ENCODE measurements at regions of chr17 and their contacts with region 1.

Region 1: GRCh38 chr17:82858352-82859126 is 18.7 kb upstream of the ZNF750 start:
- DNase-seq: peak in 4 of 9 donors; percentile 22 to 40 (median 38)
- ATAC-seq: peak; percentile 36
- H3K4me3 ChIP-seq: peak overlapping the region; percentile 30
- H3K4me3 Mint-ChIP-seq: peak overlapping the region; percentile 7 to 91 (median 82)
- H3K27ac ChIP-seq: peak overlapping the region; percentile 74
- H3K27ac Mint-ChIP-seq: peak overlapping the region; percentile 90 to 98 (median 96)
- H3K4me1 ChIP-seq: peaks cover 33 to 38% of the 10 kb centered on the region in 2 donors
- H3K4me1 Mint-ChIP-seq: peaks cover 30 to 62% (median 56%) of the 10 kb centered on the region in 7 donors
- H3K27me3 ChIP-seq: no peaks in the 10 kb centered on the region
- H3K27me3 Mint-ChIP-seq: no peaks in the 10 kb centered on the region

Region 2: DNA sequence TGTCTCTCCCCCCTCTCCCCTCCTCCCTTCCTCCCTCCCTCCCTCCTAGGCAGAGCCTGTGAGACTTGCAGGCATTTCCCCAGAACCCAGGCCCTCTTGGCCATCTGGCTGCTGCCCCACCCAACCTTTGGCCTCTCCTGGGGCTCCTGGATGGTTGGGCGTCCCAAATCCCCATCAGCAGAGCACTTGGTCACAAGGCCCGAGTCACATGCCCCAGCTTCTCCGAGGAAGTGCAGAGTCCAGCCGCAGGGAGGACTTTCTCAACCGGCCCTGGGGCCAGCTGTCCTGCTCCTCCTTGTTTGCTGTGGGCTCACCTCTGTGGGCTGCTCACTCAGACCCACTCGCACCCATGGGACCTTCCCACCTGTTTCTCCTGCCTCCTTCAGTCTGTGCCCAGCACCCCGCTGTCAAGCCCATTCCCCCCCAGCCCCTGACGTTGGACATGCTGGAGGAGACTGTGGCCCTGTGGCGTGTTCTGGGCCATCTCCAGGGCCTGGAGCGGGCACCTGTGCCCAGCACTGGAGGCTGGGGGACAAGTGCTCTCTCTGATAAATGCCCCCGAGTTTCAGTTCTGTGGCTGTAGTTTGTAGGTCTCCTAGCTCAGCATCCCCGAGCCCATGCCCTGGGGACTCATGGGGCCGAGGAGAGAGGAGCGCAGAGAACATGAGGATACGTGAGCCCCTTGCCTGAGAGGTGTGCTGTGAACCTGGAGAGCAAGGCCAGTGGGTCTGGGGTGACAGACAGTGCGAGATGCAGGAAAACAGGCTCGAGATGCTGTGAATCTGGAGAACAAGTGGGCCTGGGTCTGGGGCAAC is 23.6 kb after region 1 on chr17:
- CTCF ChIA-PET with region 1: interaction called, 14 read pairs
- POLR2A ChIA-PET with region 1: interaction called, 84 read pairs
- intact Hi-C with region 1: no loop called
- DNase-seq: no peak
- ATAC-seq: no peak
- H3K4me3 ChIP-seq: peak overlapping the region; percentile 47
- H3K4me3 Mint-ChIP-seq: peak overlapping the region; percentile 81 to 99 (median 90)
- H3K27ac ChIP-seq: peak overlapping the region; percentile 75
- H3K27ac Mint-ChIP-seq: peak overlapping the region; percentile 90 to 100 (median 99)
- H3K4me1 ChIP-seq: peaks cover 51% of the 10 kb centered on the region in 2 donors
- H3K4me1 Mint-ChIP-seq: peaks cover 51 to 90% (median 78%) of the 10 kb centered on the region in 7 donors
- H3K27me3 ChIP-seq: no peaks in the 10 kb centered on the region
- H3K27me3 Mint-ChIP-seq: no peaks in the 10 kb centered on the region

Region 3: DNA sequence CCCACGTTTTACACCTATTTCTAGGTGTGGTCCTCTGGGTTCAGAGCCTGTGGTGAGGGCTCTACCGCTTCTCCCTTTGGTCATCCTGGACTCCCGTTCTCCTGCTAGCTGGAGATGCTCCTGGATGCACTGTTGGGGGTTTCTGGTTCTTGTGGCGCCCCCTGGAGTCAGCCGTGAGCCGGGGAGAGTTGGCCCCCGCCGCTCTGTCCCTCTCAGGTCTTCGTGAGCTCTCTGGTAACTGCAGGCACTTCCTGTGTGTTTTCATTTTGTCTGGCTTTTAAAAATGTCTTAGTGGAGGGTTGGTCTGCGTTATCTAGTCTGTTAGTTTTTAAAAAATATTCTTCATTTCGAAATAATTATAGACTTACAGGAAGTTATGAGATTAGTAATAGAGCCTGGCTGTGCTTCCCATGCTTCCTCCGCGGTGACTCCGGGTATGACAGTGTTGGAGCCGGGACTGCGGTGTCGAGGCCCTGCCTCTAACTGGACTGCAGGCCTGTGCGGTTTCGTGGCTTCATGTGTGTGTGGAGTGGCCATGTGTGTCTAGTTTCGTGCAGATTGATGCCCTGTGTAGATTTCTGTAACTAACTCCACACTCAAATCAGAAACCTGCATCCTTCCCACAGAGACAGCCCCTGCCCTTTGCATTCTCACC is 59.3 kb after region 1 on chr17:
- CTCF ChIA-PET with region 1: interaction called, 13 read pairs
- POLR2A ChIA-PET with region 1: interaction called, 3 read pairs
- intact Hi-C with region 1: loop called in 1 of 2 experiments (anchors 5 kb)
- DNase-seq: peak in 3 of 9 donors; percentile 21 to 32 (median 28)
- ATAC-seq: peak; percentile 42
- H3K4me3 ChIP-seq: no peak overlapping the region
- H3K4me3 Mint-ChIP-seq: no peak overlapping the region
- H3K27ac ChIP-seq: no peak overlapping the region
- H3K27ac Mint-ChIP-seq: no peak overlapping the region
- H3K4me1 ChIP-seq: no peaks in the 10 kb centered on the region
- H3K4me1 Mint-ChIP-seq: peaks cover 0 to 11% (median 7%) of the 10 kb centered on the region in 7 donors
- H3K27me3 ChIP-seq: no peaks in the 10 kb centered on the region
- H3K27me3 Mint-ChIP-seq: no peaks in the 10 kb centered on the region